ENCODE measurements at regions of chr19 and their contacts with region 1.

Region 1: GRCh38 chr19:27974082-27974513 is 1238.9 kb downstream of the UQCRFS1 start:
- DNase-seq: no peak
- ATAC-seq: peak; percentile 80; the same call in 1 of the 2 replicates
- H3K4me3 ChIP-seq: no peak overlapping the region
- H3K27ac ChIP-seq: no peak overlapping the region
- H3K4me1 ChIP-seq: no peaks in the 10 kb centered on the region
- H3K27me3 ChIP-seq: no peaks in the 10 kb centered on the region
- CTCF ChIP-seq: peak; percentile 87

Region 2: DNA sequence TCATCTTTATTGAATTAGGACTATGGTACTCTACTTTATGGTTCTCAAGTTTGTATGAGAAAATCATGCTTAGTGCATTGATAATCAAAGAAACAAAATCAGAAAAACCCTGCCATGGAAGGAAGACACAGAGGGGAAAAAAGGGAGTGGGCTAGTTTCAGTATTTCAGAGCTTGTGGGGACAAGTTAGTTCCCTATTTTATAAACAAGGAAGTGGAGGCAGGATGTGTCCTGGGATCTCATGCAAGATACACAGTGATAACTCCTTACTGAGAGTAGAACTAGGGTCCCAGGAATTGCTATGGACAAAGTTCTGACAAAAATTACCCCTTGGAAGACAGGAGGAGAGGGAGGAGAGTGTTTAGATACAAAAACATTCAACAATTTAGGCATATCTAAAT is 38.4 kb before region 1 on chr19:
- CTCF ChIA-PET with region 1: no interaction called
- POLR2A ChIA-PET with region 1: no interaction called
- in situ Hi-C with region 1: no loop called
- intact Hi-C with region 1: no loop called
- DNase-seq: no peak
- ATAC-seq: no peak
- H3K4me3 ChIP-seq: no peak overlapping the region
- H3K27ac ChIP-seq: no peak overlapping the region
- H3K4me1 ChIP-seq: no peaks in the 10 kb centered on the region
- H3K27me3 ChIP-seq: no peaks in the 10 kb centered on the region
- CTCF ChIP-seq: no peak

Region 3: DNA sequence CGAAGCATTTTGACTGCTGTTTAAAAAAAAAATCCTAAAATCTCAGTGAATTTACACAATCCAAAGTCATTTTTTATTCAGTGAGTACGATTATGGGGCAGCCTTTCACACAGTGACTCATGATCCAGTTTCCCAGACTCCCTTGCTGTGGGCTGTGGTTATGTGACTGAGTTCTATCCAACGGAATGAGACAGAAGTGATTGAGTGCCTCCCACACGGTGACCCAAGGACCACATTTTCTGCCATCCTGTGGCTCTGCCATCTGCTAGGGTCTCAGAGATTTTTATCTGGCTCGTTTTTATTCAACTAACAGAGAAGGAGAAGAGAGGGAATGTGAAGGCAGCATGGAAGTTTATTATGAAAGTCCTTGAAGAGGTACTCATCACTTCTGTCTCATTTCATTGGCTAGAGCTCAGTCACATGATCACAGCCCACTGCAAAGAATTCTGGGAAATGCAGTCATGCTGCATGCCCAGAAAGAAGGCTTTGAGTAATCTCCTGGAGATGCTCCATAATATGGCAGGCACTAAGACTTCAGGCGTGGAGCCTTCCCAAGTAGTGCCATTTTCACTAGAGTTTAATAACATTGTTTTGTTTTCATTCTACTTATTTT is 239.5 kb after region 1 on chr19:
- CTCF ChIA-PET with region 1: no interaction called
- POLR2A ChIA-PET with region 1: interaction called, 5 read pairs
- in situ Hi-C with region 1: no loop called
- intact Hi-C with region 1: loop called (anchors 10 kb)
- DNase-seq: no peak
- ATAC-seq: no peak
- H3K4me3 ChIP-seq: no peak overlapping the region
- H3K27ac ChIP-seq: no peak overlapping the region
- H3K4me1 ChIP-seq: no peaks in the 10 kb centered on the region
- H3K27me3 ChIP-seq: peaks cover 2% of the 10 kb centered on the region; the same call in 1 of the 2 replicates
- CTCF ChIP-seq: no peak